Breast epithelium (tissue), 4 donors: ENCODE measurements at regions of chr3 and their contacts with region 1.

Region 1: DNA sequence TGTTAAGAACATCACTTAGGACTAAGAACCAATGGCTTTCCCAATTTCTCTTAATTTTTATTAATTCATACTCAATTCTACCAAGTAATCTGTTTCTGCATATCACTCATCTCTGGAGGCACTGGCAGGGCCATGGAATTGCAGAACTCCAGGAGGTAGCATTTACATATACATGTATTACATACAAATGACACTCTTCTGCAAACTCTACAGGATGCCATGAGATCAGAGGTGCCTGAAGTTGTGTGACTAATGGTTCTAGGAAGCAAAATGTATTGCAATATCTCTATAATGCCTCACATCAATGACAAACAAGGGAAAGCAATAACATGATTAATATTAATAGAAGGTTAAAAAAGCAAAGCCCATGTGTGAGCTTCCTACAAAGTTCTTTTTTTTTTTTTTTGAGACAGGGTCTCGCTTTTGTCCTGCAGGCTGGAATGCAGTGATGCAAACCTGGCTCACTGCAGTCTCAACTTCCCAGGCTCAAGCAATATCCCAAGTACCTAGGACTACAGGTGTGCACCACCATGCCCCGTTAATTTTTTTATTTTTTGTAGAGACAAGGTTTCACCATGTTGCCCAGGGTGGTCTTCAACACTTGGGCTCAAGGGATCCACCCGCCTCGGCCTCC is 33.0 kb downstream of the DENND6A start:
- DNase-seq: no peak
- H3K4me3 ChIP-seq: no peak overlapping the region
- H3K27ac ChIP-seq: no peak overlapping the region
- H3K4me1 ChIP-seq: no peaks in the 10 kb centered on the region
- H3K27me3 ChIP-seq: no peaks in the 10 kb centered on the region
- CTCF ChIP-seq: no peak
- POLR2A ChIP-seq: no peak

Region 2: DNA sequence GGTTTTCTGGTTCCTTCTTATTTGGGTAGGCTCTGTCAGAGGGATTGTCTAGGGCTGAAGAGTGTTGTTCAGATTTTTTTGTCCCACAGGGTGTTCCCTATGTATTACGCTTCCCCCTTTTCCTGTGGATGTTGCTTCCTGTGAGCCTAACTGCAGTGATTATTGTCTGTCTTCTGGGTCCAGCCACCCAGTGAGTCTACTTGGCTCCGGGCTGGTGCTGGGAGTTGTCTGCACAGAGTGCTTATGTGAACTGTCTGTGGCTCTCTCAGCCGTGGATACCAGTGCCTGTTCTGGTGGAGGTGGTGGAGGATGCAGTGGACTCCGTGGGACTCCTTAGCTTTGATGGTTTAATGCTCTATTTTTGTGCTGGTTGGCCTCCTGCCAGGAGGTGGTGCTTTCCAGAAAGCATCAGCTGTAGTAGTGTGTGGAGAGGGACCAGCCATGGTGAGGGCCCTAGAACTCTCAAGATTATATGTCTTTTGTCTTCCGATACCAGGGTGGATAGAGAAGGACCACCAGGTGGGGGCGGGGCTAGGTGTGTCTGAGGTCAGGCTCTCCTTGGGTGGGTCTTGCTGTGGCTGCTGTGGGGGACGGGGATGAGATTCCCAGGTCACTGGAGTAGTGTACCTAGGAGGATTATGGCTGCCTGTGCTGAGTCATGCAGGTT is 1049.1 kb before region 1 on chr3:
- intact Hi-C with region 1: no loop called
- DNase-seq: no peak
- H3K4me3 ChIP-seq: no peak overlapping the region
- H3K27ac ChIP-seq: peak overlapping the region in 1 of 2 donors; percentile 4
- H3K4me1 ChIP-seq: no peaks in the 10 kb centered on the region
- H3K27me3 ChIP-seq: no peaks in the 10 kb centered on the region
- CTCF ChIP-seq: no peak
- POLR2A ChIP-seq: no peak

Region 3: GRCh38 chr3:57026918-57027317 is 633.0 kb before region 1 on chr3:
- intact Hi-C with region 1: no loop called
- DNase-seq: no peak
- H3K4me3 ChIP-seq: no peak overlapping the region
- H3K27ac ChIP-seq: no peak overlapping the region
- H3K4me1 ChIP-seq: no peaks in the 10 kb centered on the region
- H3K27me3 ChIP-seq: no peaks in the 10 kb centered on the region
- CTCF ChIP-seq: no peak
- POLR2A ChIP-seq: no peak

Region 4: DNA sequence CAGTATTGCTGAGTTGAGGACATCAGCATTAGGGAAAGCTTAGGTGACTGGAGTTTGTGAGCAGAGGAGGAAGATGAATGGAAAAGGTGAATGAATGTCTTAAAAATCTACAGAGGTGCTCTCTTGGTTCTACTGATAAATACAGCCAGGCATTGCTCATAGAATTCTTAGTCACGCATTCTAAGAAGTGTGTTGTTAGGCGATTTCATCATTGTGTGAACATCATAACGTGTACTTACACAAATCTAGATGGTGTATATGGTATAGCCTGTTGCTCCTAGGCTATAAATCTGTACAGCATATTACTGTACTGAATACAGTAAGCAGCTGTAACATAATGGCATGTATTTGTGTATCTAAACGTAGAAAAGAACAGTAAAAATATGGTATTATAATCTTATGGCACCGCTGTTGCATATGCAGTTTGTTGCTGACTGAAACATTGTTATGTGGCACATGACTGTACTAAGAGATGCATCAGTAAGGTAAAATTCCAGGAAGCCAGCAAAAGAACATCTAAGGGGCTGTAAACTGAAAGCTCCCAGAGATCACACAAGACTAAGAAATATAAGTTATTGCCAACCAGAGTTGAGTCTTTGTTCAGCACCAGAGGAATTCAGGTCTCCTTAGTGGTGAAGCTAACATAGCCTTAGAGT is 324.5 kb before region 1 on chr3:
- intact Hi-C with region 1: no loop called
- DNase-seq: no peak
- H3K4me3 ChIP-seq: no peak overlapping the region
- H3K27ac ChIP-seq: no peak overlapping the region
- H3K4me1 ChIP-seq: no peaks in the 10 kb centered on the region
- H3K27me3 ChIP-seq: no peaks in the 10 kb centered on the region
- CTCF ChIP-seq: no peak
- POLR2A ChIP-seq: no peak

Region 5: GRCh38 chr3:57354768-57355167 is 305.2 kb before region 1 on chr3:
- intact Hi-C with region 1: loop called (anchors 5 kb)
- DNase-seq: no peak
- H3K4me3 ChIP-seq: no peak overlapping the region
- H3K27ac ChIP-seq: no peak overlapping the region
- H3K4me1 ChIP-seq: no peaks in the 10 kb centered on the region
- H3K27me3 ChIP-seq: no peaks in the 10 kb centered on the region
- CTCF ChIP-seq: no peak
- POLR2A ChIP-seq: no peak